Activated naive CD4-positive, alpha-beta T cell treated with anti-CD3 and anti-CD28 coated beads, Interleukin-2, amount 10 ng/mL, durations not matched to agents 7 days and 5 days (primary cell): ENCODE measurements at regions of chr7 and their contacts with region 1.

Region 1: GRCh38 chr7:24979863-24980533 is at the start of gene OSBPL3:
- DNase-seq: peak; percentile 97
- H3K4me3 Mint-ChIP-seq: peak within 1 kb of the TSS; percentile 85
- H3K27ac Mint-ChIP-seq: peak within 1 kb of the TSS; percentile 92
- H3K4me1 Mint-ChIP-seq: peaks cover 62% of the 10 kb centered on the region
- H3K27me3 Mint-ChIP-seq: peaks cover 19% of the 10 kb centered on the region

Region 2: GRCh38 chr7:24135003-24135817 is 844.8 kb before region 1 on chr7:
- CTCF ChIA-PET with region 1: no interaction called
- DNase-seq: no peak
- H3K4me3 Mint-ChIP-seq: no peak overlapping the region
- H3K27ac Mint-ChIP-seq: no peak overlapping the region
- H3K4me1 Mint-ChIP-seq: peaks cover 9% of the 10 kb centered on the region
- H3K27me3 Mint-ChIP-seq: no peaks in the 10 kb centered on the region

Region 3: DNA sequence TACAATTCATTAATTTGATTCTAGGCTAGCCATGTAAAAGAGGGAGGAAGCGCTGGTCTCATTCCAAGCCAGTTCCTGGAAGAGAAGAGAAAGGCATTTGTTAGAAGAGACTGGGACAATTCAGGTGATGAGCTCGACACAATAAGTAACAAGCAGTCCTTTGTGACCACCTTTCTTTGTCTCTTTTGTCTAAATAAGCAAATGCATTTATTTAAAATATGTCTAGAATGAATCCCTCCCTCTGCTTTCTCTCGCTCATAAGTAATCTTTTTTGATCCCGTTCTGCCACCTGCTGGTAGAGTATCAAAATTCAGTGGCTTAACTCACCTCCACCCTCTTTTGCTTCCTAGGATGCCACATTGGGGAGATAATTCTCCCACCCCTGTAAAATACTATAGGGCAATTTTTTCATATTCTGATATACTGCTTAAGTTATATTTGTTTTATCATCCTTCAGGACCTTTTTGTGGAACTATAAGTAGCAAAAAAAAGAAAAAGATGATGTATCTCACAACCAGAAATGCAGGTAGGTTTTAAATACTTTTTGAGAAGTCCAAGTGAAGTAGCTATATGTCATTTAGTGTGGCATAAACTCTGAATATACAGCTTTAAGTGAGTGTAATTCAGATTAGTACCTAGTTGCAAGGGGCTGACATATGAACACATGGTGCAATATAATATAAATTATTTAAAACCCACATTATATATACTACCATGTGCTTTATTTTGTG is 314.3 kb before region 1 on chr7:
- CTCF ChIA-PET with region 1: no interaction called
- DNase-seq: peak; percentile 62
- H3K4me3 Mint-ChIP-seq: no peak overlapping the region
- H3K27ac Mint-ChIP-seq: no peak overlapping the region
- H3K4me1 Mint-ChIP-seq: no peaks in the 10 kb centered on the region
- H3K27me3 Mint-ChIP-seq: no peaks in the 10 kb centered on the region

Region 4: DNA sequence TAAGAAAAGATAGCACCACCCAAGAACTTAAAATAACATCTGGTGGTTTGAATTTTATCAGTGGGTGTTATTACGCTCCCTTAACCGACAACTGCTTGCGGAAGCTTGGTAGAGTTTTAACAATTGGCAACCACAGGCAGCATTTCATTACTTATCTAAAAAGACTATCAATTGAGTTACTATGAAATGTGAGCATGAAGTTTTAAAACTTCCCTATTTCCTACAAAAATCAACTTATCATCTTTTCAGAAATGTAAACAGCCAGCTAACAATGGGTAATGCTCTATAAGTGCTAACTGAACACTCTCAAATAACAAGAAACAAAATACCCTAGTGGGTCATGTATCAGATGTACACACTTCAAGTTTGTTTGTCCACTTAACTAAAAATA is 68.8 kb before region 1 on chr7:
- CTCF ChIA-PET with region 1: interaction called, 14 read pairs
- DNase-seq: peak; percentile 51
- H3K4me3 Mint-ChIP-seq: peak overlapping the region; percentile 55
- H3K27ac Mint-ChIP-seq: peak overlapping the region; percentile 95
- H3K4me1 Mint-ChIP-seq: peaks cover 64% of the 10 kb centered on the region
- H3K27me3 Mint-ChIP-seq: no peaks in the 10 kb centered on the region

Region 5: GRCh38 chr7:25069900-25070443 is 90.0 kb after region 1 on chr7:
- CTCF ChIA-PET with region 1: interaction called, 14 read pairs
- DNase-seq: peak; percentile 65
- H3K4me3 Mint-ChIP-seq: no peak overlapping the region
- H3K27ac Mint-ChIP-seq: no peak overlapping the region
- H3K4me1 Mint-ChIP-seq: peaks cover 11% of the 10 kb centered on the region
- H3K27me3 Mint-ChIP-seq: peaks cover 13% of the 10 kb centered on the region